ENCODE measurements at regions of chr14 and their contacts with region 1.

Region 1: DNA sequence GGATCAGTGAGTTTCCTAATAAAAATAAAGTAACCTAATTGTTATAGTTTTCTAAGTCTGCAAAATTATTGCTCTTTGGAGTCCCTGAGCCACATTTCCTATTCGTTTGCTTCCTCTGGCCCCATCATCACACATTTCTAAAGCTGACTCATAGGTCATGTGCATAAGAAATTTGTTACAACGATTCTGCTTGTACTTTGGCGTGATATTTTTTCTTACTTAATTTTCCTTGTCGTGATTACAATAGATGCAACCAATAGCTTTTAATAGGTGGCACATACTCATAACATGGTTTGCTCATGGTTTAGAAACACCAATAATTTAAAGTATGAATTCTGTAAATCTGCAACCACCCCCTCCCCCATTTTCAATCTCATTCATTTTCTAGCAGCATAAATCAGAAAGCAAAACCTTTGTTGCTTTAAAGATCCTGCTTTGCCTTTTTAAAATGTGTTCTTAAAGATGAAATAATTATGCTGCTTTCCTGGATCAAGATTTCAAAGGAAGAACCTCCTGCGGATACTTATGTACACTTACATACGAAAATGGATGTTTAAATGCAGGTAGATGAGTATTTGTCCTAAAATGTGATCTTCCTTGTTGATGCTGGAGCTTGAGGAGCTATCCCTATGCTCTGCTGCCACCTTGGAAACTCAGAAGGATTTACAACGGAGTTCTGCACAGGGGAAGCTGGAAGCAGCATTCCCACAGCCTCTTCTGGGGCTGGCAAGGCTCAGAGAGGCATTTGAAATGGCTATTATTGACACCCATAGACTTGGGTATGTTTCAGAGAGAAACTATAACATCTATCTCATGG is 1.7 kb upstream of the FLRT2 start:
- DNase-seq: peak in 3 of 5 donors; percentile 29 to 38 (median 34)
- ATAC-seq: peak; percentile 44 to 74 (median 70)
- H3K4me3 ChIP-seq: peak overlapping the region in 11 of 12 donors; percentile 22 to 80 (median 61)
- H3K27ac ChIP-seq: peak overlapping the region in 8 of 12 donors; percentile 42 to 78 (median 68)
- H3K4me1 ChIP-seq: peaks cover 0 to 51% (median 19%) of the 10 kb centered on the region in 12 donors
- H3K27me3 ChIP-seq: peaks cover 0 to 45% (median 33%) of the 10 kb centered on the region in 9 donors
- CTCF ChIP-seq: peak in 10 of 12 donors; percentile 29 to 69 (median 56)
- POLR2A ChIP-seq: no peak

Region 2: GRCh38 chr14:84006643-84007155 is 1521.6 kb before region 1 on chr14:
- intact Hi-C with region 1: loop called in 8 of 10 experiments (anchors 5 to 10 kb)
- DNase-seq: peak in 2 of 5 donors; percentile 23 to 34
- ATAC-seq: peak in 3 of 4 donors; percentile 13 to 62 (median 39)
- H3K4me3 ChIP-seq: no peak overlapping the region
- H3K27ac ChIP-seq: no peak overlapping the region
- H3K4me1 ChIP-seq: peaks cover 0 to 10% (median 0%) of the 10 kb centered on the region in 12 donors
- H3K27me3 ChIP-seq: no peaks in the 10 kb centered on the region
- CTCF ChIP-seq: peak in 7 of 12 donors; percentile 7 to 42 (median 37)
- POLR2A ChIP-seq: no peak

Region 3: DNA sequence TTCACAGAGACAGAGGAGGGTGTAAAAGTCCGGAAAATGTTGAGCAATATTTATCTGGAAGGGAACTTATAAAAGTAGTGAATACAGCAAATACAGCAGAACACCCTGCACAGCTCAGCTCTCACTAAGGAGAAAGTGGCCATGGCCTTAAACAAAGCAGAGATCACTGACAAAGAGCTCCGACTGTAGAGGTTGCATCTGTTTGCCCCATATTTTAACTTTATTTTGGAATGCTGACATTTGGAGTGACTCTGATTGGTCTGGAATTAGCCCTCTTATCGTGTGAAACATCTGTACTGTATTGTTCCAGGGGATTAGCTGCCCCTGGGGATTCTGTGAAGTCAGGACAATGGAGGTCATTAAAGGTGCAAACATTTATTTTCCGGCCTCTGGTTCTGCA is 1274.0 kb before region 1 on chr14:
- intact Hi-C with region 1: loop called in 1 of 10 experiments (anchors 5 kb)
- DNase-seq: peak in 2 of 5 donors; percentile 37 to 42
- ATAC-seq: peak; percentile 80 to 96 (median 84)
- H3K4me3 ChIP-seq: peak overlapping the region in 3 of 12 donors; percentile 2 to 4 (median 2)
- H3K27ac ChIP-seq: peak overlapping the region in 1 of 12 donors; percentile 2
- H3K4me1 ChIP-seq: peaks cover 0 to 35% (median 2%) of the 10 kb centered on the region in 12 donors
- H3K27me3 ChIP-seq: no peaks in the 10 kb centered on the region
- CTCF ChIP-seq: no peak
- POLR2A ChIP-seq: no peak

Region 4: GRCh38 chr14:85195872-85196477 is 332.3 kb before region 1 on chr14:
- intact Hi-C with region 1: loop called in 1 of 10 experiments (anchors 10 kb)
- DNase-seq: no peak
- ATAC-seq: no peak
- H3K4me3 ChIP-seq: no peak overlapping the region
- H3K27ac ChIP-seq: no peak overlapping the region
- H3K4me1 ChIP-seq: no peaks in the 10 kb centered on the region
- H3K27me3 ChIP-seq: no peaks in the 10 kb centered on the region
- CTCF ChIP-seq: peak; percentile 14 to 55 (median 38)
- POLR2A ChIP-seq: no peak

Region 5: DNA sequence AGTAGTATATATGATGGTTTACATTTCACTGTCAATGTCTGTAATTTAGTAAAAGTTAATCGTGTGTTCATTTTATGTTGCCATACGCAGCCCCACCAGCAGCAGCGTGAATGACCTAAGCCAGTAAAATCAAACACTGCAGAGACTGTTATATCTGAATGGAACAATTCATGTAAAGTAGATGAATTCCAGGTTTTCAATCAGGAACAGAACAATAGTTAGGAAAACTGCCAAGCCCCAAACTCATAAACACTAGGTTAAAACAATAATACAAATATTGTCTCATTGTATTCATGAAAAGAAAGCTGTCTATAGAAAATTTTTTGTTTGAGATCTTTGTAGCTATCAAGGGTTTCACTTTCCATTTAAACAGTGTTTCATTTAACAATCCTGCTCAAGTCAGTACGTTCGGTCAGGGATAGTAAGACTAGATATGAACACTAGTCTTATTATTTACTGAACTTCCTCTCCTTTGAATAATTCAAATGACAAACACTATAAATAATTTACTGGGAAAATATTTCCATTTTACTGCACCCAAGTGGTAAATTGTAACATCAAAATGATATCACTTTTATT is 255.1 kb before region 1 on chr14:
- intact Hi-C with region 1: loop called in 2 of 10 experiments (anchors 5 to 10 kb)
- DNase-seq: no peak
- ATAC-seq: peak in 1 of 4 donors; percentile 49
- H3K4me3 ChIP-seq: peak overlapping the region in 4 of 12 donors; percentile 5 to 31 (median 27)
- H3K27ac ChIP-seq: no peak overlapping the region
- H3K4me1 ChIP-seq: no peaks in the 10 kb centered on the region
- H3K27me3 ChIP-seq: no peaks in the 10 kb centered on the region
- CTCF ChIP-seq: no peak
- POLR2A ChIP-seq: no peak

Region 6: GRCh38 chr14:85415015-85415712 is 113.1 kb before region 1 on chr14:
- intact Hi-C with region 1: loop called in 3 of 10 experiments (anchors 5 to 10 kb)
- DNase-seq: peak in 4 of 5 donors; percentile 43 to 52 (median 48)
- ATAC-seq: peak; percentile 78 to 99 (median 95)
- H3K4me3 ChIP-seq: peak overlapping the region in 7 of 12 donors; percentile 7 to 42 (median 17)
- H3K27ac ChIP-seq: peak overlapping the region in 4 of 12 donors; percentile 13 to 22 (median 20)
- H3K4me1 ChIP-seq: peaks cover 0 to 23% (median 0%) of the 10 kb centered on the region in 12 donors
- H3K27me3 ChIP-seq: no peaks in the 10 kb centered on the region
- CTCF ChIP-seq: peak in 8 of 12 donors; percentile 5 to 56 (median 40)
- POLR2A ChIP-seq: no peak

Region 7: GRCh38 chr14:85421186-85421877 is 107.0 kb before region 1 on chr14:
- intact Hi-C with region 1: loop called in 3 of 10 experiments (anchors 5 to 10 kb)
- DNase-seq: no peak
- ATAC-seq: peak in 1 of 4 donors; percentile 38
- H3K4me3 ChIP-seq: no peak overlapping the region
- H3K27ac ChIP-seq: no peak overlapping the region
- H3K4me1 ChIP-seq: peaks cover 0 to 8% (median 0%) of the 10 kb centered on the region in 12 donors
- H3K27me3 ChIP-seq: no peaks in the 10 kb centered on the region
- CTCF ChIP-seq: no peak
- POLR2A ChIP-seq: no peak

Region 8: GRCh38 chr14:85463512-85463911 is 64.8 kb before region 1 on chr14:
- intact Hi-C with region 1: no loop called
- DNase-seq: no peak
- ATAC-seq: no peak
- H3K4me3 ChIP-seq: no peak overlapping the region
- H3K27ac ChIP-seq: no peak overlapping the region
- H3K4me1 ChIP-seq: no peaks in the 10 kb centered on the region
- H3K27me3 ChIP-seq: no peaks in the 10 kb centered on the region
- CTCF ChIP-seq: no peak
- POLR2A ChIP-seq: no peak

Measured in heart left ventricle (tissue), 16 donors.